ENCODE measurements at regions of chr17 and their contacts with region 1.

Region 1: GRCh38 chr17:63611354-63611753 is 10.7 kb downstream of the TACO1 start:
- DNase-seq: no peak
- H3K4me3 ChIP-seq: no peak overlapping the region
- H3K27ac ChIP-seq: no peak overlapping the region
- H3K27me3 ChIP-seq: no peaks in the 10 kb centered on the region
- CTCF ChIP-seq: no peak

Region 2: DNA sequence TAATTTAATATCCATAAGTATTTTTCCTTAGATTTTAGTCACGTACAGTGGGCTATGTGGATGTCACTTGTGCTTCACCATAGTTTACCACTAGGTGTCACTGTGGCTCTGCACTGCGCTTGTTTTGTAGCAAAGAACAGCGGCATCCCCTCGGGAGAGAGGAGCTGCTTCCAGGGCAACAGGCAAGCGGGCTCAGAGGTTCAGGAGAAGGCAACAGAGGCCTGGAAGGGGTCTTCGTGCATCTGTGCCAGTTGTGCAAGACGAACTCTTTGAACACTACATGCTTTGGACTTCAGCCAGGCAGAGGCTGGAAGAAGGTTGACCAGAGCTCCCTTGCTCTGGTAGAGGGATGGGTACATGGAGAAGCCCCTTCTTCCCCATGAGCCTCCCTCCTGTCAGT is 185.9 kb before region 1 on chr17:
- CTCF ChIA-PET with region 1: interaction called, 296 read pairs
- POLR2A ChIA-PET with region 1: interaction called, 3 read pairs
- DNase-seq: peak; percentile 68
- H3K4me3 ChIP-seq: no peak overlapping the region
- H3K27ac ChIP-seq: no peak overlapping the region
- H3K27me3 ChIP-seq: no peaks in the 10 kb centered on the region
- CTCF ChIP-seq: peak; percentile 98

Region 3: DNA sequence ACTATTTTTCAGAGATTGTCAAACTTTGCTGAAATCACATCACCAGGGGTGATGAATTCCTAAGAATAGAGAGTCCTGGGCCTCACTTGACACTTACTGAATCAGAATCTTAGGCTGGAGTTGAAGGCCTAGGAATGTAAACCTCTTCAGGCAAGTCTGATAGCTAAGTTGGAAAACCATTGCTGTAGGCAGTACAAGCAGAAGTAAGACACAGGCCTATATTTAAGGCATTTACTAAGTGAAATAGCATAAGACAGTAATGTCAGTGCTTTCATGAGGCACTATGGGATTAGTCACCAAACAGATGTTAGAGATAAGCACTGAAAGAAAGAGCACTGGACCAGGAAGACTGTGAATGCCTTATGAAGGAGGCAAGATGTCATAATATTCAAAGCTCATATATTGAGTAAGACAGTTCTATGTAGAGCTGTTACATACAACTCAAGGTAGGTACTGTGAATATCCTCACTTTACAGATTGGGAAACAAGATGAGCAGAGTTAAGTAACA is 39.5 kb before region 1 on chr17:
- CTCF ChIA-PET with region 1: interaction called, 12 read pairs
- POLR2A ChIA-PET with region 1: no interaction called
- DNase-seq: peak; percentile 44
- H3K4me3 ChIP-seq: no peak overlapping the region
- H3K27ac ChIP-seq: no peak overlapping the region
- H3K27me3 ChIP-seq: no peaks in the 10 kb centered on the region
- CTCF ChIP-seq: no peak

Region 4: DNA sequence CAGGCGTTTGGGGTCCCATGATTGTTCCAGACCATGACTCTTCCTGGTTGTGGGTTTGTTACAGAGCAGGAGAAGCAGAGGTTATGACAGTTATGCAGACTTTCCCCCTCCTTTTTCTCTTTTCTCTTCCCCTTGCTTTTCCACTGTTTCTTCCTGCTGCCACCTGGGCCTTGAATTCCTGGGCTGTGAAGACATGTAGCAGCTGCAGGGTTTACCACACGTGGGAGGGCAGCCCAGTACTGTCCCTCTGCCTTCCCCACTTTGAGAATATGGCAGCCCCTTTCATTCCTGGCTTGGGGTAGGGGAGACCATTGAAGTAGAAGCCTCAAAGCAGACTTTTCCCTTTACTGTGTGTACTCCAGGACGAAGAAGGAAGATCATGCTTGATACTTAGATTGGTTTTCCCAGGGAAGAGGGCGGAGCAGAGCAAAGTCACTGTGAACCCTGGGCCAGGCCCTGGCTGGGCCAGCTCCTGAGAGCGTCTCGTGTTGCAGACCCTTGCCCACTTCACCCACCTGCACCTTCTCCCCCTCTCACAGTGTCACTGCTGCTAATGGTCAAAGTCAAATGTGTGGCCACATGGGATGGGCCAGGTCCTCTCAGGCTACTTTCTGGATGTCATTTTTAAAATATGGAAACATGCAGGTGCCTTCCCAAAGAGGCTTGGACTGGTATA is 18.4 kb before region 1 on chr17:
- CTCF ChIA-PET with region 1: interaction called, 12 read pairs
- POLR2A ChIA-PET with region 1: no interaction called
- DNase-seq: no peak
- H3K4me3 ChIP-seq: no peak overlapping the region
- H3K27ac ChIP-seq: no peak overlapping the region
- H3K27me3 ChIP-seq: no peaks in the 10 kb centered on the region
- CTCF ChIP-seq: no peak

Region 5: GRCh38 chr17:63600569-63601438 is 10.6 kb before region 1 on chr17 and contains the start of gene TACO1:
- CTCF ChIA-PET with region 1: interaction called, 44 read pairs
- POLR2A ChIA-PET with region 1: no interaction called
- DNase-seq: peak; percentile 60
- H3K4me3 ChIP-seq: peak within 1 kb of the TSS; percentile 88
- H3K27ac ChIP-seq: peak within 1 kb of the TSS; percentile 61
- H3K27me3 ChIP-seq: no peaks in the 10 kb centered on the region
- CTCF ChIP-seq: no peak
- polyA plus RNA-seq, gene TACO1: 23.1 and 23.2 TPM in 2 replicates

Region 6: GRCh38 chr17:63621766-63622519 is 10.6 kb after region 1 on chr17 and contains the start of gene MAP3K3:
- CTCF ChIA-PET with region 1: interaction called, 33 read pairs
- POLR2A ChIA-PET with region 1: interaction called, 7 read pairs
- DNase-seq: peak; percentile 100
- H3K4me3 ChIP-seq: peak within 1 kb of the TSS; percentile 75
- H3K27ac ChIP-seq: peak within 1 kb of the TSS; percentile 65
- H3K27me3 ChIP-seq: no peaks in the 10 kb centered on the region
- CTCF ChIP-seq: peak; percentile 17; the same call in 1 of the 2 replicates
- polyA plus RNA-seq, gene MAP3K3: 14.9 and 15.3 TPM in 2 replicates

Region 7: GRCh38 chr17:63722403-63722802 is 111.0 kb after region 1 on chr17:
- CTCF ChIA-PET with region 1: no interaction called
- POLR2A ChIA-PET with region 1: no interaction called
- DNase-seq: no peak
- H3K4me3 ChIP-seq: no peak overlapping the region
- H3K27ac ChIP-seq: no peak overlapping the region
- H3K27me3 ChIP-seq: no peaks in the 10 kb centered on the region
- CTCF ChIP-seq: no peak

Region 8: GRCh38 chr17:64968652-64969501 is 1357.5 kb after region 1 on chr17:
- CTCF ChIA-PET with region 1: no interaction called
- POLR2A ChIA-PET with region 1: no interaction called
- DNase-seq: no peak
- H3K4me3 ChIP-seq: no peak overlapping the region
- H3K27ac ChIP-seq: no peak overlapping the region
- H3K27me3 ChIP-seq: no peaks in the 10 kb centered on the region
- CTCF ChIP-seq: no peak

Measured in AG04450 (cell line).